CD8-positive, alpha-beta T cell (primary cell): ENCODE measurements at regions of chr16 and their contacts with region 1.

Region 1: GRCh38 chr16:69726296-69727060 is at the start of gene NQO1:
- DNase-seq: peak; percentile 66 to 95 (median 85)
- ATAC-seq: peak; percentile 97
- H3K4me3 ChIP-seq: peak within 1 kb of the TSS; percentile 63 to 85
- H3K4me3 Mint-ChIP-seq: peak within 1 kb of the TSS; percentile 91
- H3K27ac ChIP-seq: peak within 1 kb of the TSS; percentile 54 to 67
- H3K27ac Mint-ChIP-seq: peak within 1 kb of the TSS; percentile 87
- H3K4me1 ChIP-seq: peaks cover 20% of the 10 kb centered on the region
- H3K4me1 Mint-ChIP-seq: peaks cover 23% of the 10 kb centered on the region
- H3K27me3 ChIP-seq: no peaks in the 10 kb centered on the region
- H3K27me3 Mint-ChIP-seq: no peaks in the 10 kb centered on the region
- CTCF ChIP-seq: no peak
- total RNA-seq, gene NQO1: 0.27 to 0.28 TPM

Region 2: DNA sequence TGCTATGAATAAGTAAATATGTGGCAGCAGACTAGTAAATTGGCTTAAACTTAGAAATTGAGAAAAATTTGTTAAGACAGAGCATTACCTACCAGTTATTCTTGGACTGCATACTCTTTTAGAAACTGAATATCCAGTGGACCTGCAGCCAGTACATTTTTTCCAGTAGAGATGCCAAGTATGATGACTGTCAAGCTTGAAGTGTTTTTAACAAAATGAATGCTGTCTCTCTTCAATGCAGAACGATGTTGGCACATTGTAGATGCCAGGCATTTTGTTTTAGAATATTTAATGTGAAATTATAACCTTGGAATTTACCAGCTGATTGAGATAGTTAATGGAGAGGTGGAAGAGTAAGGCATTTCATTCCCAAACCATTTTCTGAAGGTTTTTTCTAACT is 108.2 kb before region 1 on chr16:
- CTCF ChIA-PET with region 1: no interaction called
- POLR2A ChIA-PET with region 1: no interaction called
- intact Hi-C with region 1: no loop called
- DNase-seq: no peak
- ATAC-seq: no peak
- H3K4me3 ChIP-seq: no peak overlapping the region
- H3K4me3 Mint-ChIP-seq: no peak overlapping the region
- H3K27ac ChIP-seq: no peak overlapping the region
- H3K27ac Mint-ChIP-seq: peak overlapping the region; percentile 52
- H3K4me1 ChIP-seq: no peaks in the 10 kb centered on the region
- H3K4me1 Mint-ChIP-seq: peaks cover 36% of the 10 kb centered on the region
- H3K27me3 ChIP-seq: no peaks in the 10 kb centered on the region
- H3K27me3 Mint-ChIP-seq: no peaks in the 10 kb centered on the region
- CTCF ChIP-seq: no peak

Region 3: GRCh38 chr16:69754469-69755310 is 28.2 kb after region 1 on chr16 and contains the start of gene NOB1:
- CTCF ChIA-PET with region 1: interaction called, 28 read pairs
- POLR2A ChIA-PET with region 1: interaction called, 15 read pairs
- intact Hi-C with region 1: loop called in 1 of 2 experiments (anchors 1 kb)
- DNase-seq: peak; percentile 94 to 100 (median 98)
- ATAC-seq: peak; percentile 97
- H3K4me3 ChIP-seq: peak within 1 kb of the TSS; percentile 91 to 100
- H3K4me3 Mint-ChIP-seq: peak within 1 kb of the TSS; percentile 100
- H3K27ac ChIP-seq: peak within 1 kb of the TSS; percentile 78 to 84
- H3K27ac Mint-ChIP-seq: peak within 1 kb of the TSS; percentile 98
- H3K4me1 ChIP-seq: peaks cover 9% of the 10 kb centered on the region
- H3K4me1 Mint-ChIP-seq: peaks cover 29% of the 10 kb centered on the region
- H3K27me3 ChIP-seq: no peaks in the 10 kb centered on the region
- H3K27me3 Mint-ChIP-seq: no peaks in the 10 kb centered on the region
- CTCF ChIP-seq: peak; percentile 79
- total RNA-seq, gene NOB1: 46.4 to 48.0 TPM

Region 4: DNA sequence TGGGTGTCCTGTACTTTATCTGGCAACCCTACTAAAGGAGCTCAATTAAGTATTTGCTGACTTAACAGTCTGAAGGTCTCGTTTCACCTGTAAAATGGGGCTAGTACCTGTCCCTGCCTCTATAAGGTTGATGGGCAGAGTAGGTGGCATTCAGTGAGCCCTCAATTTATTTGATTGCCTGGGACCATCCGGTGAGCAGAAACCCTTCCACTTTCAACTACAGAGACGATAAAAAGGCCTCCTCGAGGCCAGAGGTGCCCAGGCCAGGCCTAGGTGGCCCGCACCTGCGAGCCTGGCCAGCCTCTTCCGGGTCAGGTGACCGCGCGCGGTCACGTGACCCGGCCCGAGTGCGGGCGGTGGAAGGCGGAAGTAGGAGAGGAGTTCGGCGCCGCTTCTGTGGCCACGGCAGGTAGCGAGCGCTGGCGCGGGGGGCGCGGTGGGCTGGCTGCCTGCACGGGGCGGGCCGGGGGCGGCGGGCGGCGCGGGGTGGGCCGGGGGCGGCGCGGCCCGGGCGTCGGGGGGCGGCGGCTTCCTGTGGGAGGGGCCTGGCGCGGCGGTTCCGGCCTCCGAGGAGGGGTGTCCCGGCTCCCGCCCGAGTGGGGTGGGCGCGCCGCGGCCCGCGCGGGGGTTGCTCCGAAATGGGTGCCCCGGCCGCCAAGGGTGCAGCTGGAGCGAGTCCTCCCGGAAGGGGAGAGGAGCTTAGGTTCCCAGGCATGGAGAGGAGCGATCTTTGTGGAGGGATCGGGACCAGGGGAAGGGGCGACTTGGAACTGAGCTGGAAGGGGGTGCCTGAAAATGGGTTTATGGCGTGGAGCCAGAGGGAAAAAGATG is 35.7 kb after region 1 on chr16 and contains the start of gene WWP2:
- CTCF ChIA-PET with region 1: no interaction called
- POLR2A ChIA-PET with region 1: interaction called, 10 read pairs
- intact Hi-C with region 1: no loop called
- DNase-seq: peak; percentile 54 to 92 (median 77)
- ATAC-seq: peak; percentile 81
- H3K4me3 ChIP-seq: peak within 1 kb of the TSS; percentile 91 to 100
- H3K4me3 Mint-ChIP-seq: peak within 1 kb of the TSS; percentile 94
- H3K27ac ChIP-seq: peak within 1 kb of the TSS; percentile 97 to 99
- H3K27ac Mint-ChIP-seq: peak within 1 kb of the TSS; percentile 98
- H3K4me1 ChIP-seq: peaks cover 17% of the 10 kb centered on the region
- H3K4me1 Mint-ChIP-seq: peaks cover 31% of the 10 kb centered on the region
- H3K27me3 ChIP-seq: no peaks in the 10 kb centered on the region
- H3K27me3 Mint-ChIP-seq: no peaks in the 10 kb centered on the region
- CTCF ChIP-seq: no peak
- total RNA-seq, gene WWP2: 36.7 to 36.9 TPM